ENCODE measurements at regions of chr7 and their contacts with region 1.

Region 1: DNA sequence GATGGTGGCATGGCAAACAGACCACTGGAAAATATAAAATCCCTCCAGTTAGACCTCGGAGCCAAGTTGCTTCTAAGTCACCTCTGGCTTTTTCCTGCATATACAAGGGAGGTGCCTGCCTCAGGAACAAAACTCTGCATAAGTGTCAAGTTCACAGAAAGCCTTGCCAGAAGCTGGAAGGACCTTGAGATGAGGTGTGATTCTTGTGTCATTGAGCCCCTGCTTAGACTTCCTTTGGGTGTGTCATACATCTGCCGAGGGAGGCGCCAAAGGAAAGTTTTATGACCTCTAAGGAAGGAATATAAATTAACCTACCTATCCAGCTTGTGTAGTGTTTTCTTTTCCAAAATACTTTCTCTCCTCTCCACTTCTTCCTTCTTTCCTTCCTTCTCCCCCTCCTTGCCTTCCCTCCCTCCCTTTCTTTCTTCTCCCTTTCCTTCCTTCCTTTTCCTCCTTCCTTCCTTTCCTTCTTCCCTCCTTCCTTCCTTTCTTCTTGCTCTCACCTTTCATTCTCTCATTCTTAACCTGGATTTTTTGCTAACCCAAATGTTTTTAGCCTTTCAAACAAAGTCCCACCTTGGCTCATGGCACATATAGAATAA is 75.2 kb downstream of the TRIL start:
- DNase-seq: no peak
- ATAC-seq: no peak
- H3K4me3 ChIP-seq: no peak overlapping the region
- H3K4me3 Mint-ChIP-seq: no peak overlapping the region
- H3K27ac ChIP-seq: no peak overlapping the region
- H3K27ac Mint-ChIP-seq: no peak overlapping the region
- H3K4me1 ChIP-seq: no peaks in the 10 kb centered on the region
- H3K4me1 Mint-ChIP-seq: no peaks in the 10 kb centered on the region
- H3K27me3 ChIP-seq: peaks cover 0 to 3% of the 10 kb centered on the region in 2 experiments
- H3K27me3 Mint-ChIP-seq: peaks cover 35% of the 10 kb centered on the region
- CTCF ChIP-seq: no peak

Region 2: DNA sequence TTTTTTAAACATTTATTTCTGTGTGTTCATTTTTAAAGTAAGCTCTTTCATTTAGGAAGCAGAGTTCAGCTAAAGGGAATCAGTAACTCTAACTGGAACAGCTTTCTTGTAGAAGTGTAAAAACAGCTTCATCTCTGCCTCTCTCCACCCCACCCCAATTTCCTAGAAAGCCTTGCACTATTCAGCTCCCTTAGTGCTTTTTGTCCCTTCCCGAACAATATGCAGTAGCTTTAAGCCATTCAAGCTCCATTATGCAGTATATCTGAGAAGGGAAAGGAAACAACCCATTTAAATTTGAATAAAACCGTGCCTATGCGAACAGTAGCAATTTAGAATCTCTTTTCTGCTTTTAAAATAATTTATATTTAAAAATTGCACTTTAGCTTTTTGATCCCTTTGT is 59.4 kb before region 1 on chr7:
- CTCF ChIA-PET with region 1: no interaction called
- POLR2A ChIA-PET with region 1: no interaction called
- intact Hi-C with region 1: loop called in 1 of 2 experiments (anchors 10 kb)
- DNase-seq: no peak
- ATAC-seq: no peak
- H3K4me3 ChIP-seq: no peak overlapping the region
- H3K4me3 Mint-ChIP-seq: no peak overlapping the region
- H3K27ac ChIP-seq: no peak overlapping the region
- H3K27ac Mint-ChIP-seq: no peak overlapping the region
- H3K4me1 ChIP-seq: no peaks in the 10 kb centered on the region
- H3K4me1 Mint-ChIP-seq: no peaks in the 10 kb centered on the region
- H3K27me3 ChIP-seq: no peaks in the 10 kb centered on the region
- H3K27me3 Mint-ChIP-seq: peaks cover 13% of the 10 kb centered on the region
- CTCF ChIP-seq: no peak

Region 3: GRCh38 chr7:28840592-28840995 is 42.4 kb before region 1 on chr7:
- CTCF ChIA-PET with region 1: no interaction called
- POLR2A ChIA-PET with region 1: no interaction called
- intact Hi-C with region 1: no loop called
- DNase-seq: no peak
- ATAC-seq: no peak
- H3K4me3 ChIP-seq: no peak overlapping the region
- H3K4me3 Mint-ChIP-seq: no peak overlapping the region
- H3K27ac ChIP-seq: no peak overlapping the region
- H3K27ac Mint-ChIP-seq: no peak overlapping the region
- H3K4me1 ChIP-seq: no peaks in the 10 kb centered on the region
- H3K4me1 Mint-ChIP-seq: no peaks in the 10 kb centered on the region
- H3K27me3 ChIP-seq: no peaks in the 10 kb centered on the region
- H3K27me3 Mint-ChIP-seq: peaks cover 9% of the 10 kb centered on the region
- CTCF ChIP-seq: no peak

Region 4: GRCh38 chr7:29239638-29240037 is 356.7 kb after region 1 on chr7:
- CTCF ChIA-PET with region 1: no interaction called
- POLR2A ChIA-PET with region 1: no interaction called
- intact Hi-C with region 1: no loop called
- DNase-seq: peak in 2 of 9 experiments; percentile 34 to 47
- ATAC-seq: no peak
- H3K4me3 ChIP-seq: no peak overlapping the region
- H3K4me3 Mint-ChIP-seq: no peak overlapping the region
- H3K27ac ChIP-seq: no peak overlapping the region
- H3K27ac Mint-ChIP-seq: no peak overlapping the region
- H3K4me1 ChIP-seq: no peaks in the 10 kb centered on the region
- H3K4me1 Mint-ChIP-seq: peaks cover 15% of the 10 kb centered on the region
- H3K27me3 ChIP-seq: no peaks in the 10 kb centered on the region
- H3K27me3 Mint-ChIP-seq: no peaks in the 10 kb centered on the region
- CTCF ChIP-seq: peak; percentile 34

Measured in CD8-positive, alpha-beta T cell (primary cell).